ENCODE measurements at regions of chr10 and their contacts with region 1.

Region 1: GRCh38 chr10:83545901-83546391 is 593.4 kb upstream of the GHITM start:
- DNase-seq: peak; percentile 64
- ATAC-seq: peak; percentile 36
- H3K4me3 ChIP-seq: no peak overlapping the region
- H3K27ac ChIP-seq: no peak overlapping the region
- H3K4me1 ChIP-seq: peaks cover 17% of the 10 kb centered on the region
- H3K27me3 ChIP-seq: no peaks in the 10 kb centered on the region
- CTCF ChIP-seq: no peak
- EP300 ChIP-seq: no peak
- POLR2A ChIP-seq: no peak
- RAD21 ChIP-seq: no peak

Region 2: GRCh38 chr10:83603708-83604107 is 57.8 kb after region 1 on chr10:
- CTCF ChIA-PET with region 1: no interaction called
- POLR2A ChIA-PET with region 1: no interaction called
- RAD21 ChIA-PET with region 1: no interaction called
- SMC1A ChIA-PET with region 1: interaction called, 3 read pairs
- in situ Hi-C with region 1: no loop called
- intact Hi-C with region 1: loop called (anchors 2 kb)
- DNase-seq: peak; percentile 55
- ATAC-seq: peak; percentile 98
- H3K4me3 ChIP-seq: no peak overlapping the region
- H3K27ac ChIP-seq: no peak overlapping the region
- H3K4me1 ChIP-seq: peaks cover 8% of the 10 kb centered on the region; the same call in 1 of the 2 replicates
- H3K27me3 ChIP-seq: no peaks in the 10 kb centered on the region
- CTCF ChIP-seq: no peak
- EP300 ChIP-seq: peak; percentile 29 to 64; a peak in 2 of 4 replicates
- POLR2A ChIP-seq: no peak
- RAD21 ChIP-seq: peak; percentile 40; the same call in 1 of the 2 replicates

Measured in GM12878 (cell line).